Ascending aorta (tissue), 2 donors: ENCODE measurements at regions of chr3 and their contacts with region 1.

Region 1: DNA sequence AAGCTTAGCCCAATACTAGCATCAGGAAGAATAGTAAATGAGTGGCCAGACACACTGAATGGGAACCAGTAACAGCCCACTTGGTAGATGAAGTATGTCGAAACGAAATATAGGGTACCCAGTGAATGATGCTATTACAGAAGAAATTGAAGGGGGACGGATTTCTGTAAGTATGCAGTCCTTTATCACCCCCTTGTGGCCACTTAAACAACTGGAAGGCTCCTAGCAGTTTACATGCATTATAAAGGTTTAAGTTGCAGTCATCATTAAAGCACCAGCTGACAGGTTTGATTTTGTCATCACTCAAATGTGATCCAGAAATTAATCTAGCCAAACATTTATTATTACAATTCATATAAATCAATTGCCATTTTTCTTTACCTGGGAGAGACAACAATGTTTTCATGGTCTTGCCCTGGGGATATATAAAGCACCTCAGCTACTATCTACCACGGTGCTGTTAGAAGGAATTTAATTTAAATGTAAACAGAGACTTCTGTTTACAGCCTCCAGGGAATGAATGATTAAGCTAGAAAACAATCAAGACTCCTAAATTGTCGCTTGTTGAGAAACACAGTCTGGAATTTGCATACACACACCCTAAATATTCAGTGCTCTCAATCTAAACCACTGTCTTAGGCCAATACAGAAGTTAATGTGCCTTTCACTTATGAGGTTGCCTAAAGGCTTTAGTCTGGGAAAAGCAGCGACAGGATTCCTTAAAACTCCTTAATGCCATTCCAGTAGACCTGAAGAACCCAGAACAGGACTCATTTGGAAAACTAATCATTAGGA is 7.8 kb downstream of the EIF1B start:
- DNase-seq: no peak
- H3K4me3 ChIP-seq: no peak overlapping the region
- H3K27ac ChIP-seq: no peak overlapping the region
- H3K4me1 ChIP-seq: no peaks in the 10 kb centered on the region
- H3K27me3 ChIP-seq: no peaks in the 10 kb centered on the region
- CTCF ChIP-seq: peak; percentile 28 to 78 (median 64)

Region 2: GRCh38 chr3:40191850-40192448 is 125.3 kb before region 1 on chr3:
- intact Hi-C with region 1: loop called (anchors 1 kb)
- DNase-seq: peak in 1 of 2 donors; percentile 73
- H3K4me3 ChIP-seq: no peak overlapping the region
- H3K27ac ChIP-seq: no peak overlapping the region
- H3K4me1 ChIP-seq: no peaks in the 10 kb centered on the region
- H3K27me3 ChIP-seq: no peaks in the 10 kb centered on the region
- CTCF ChIP-seq: peak; percentile 56 to 88 (median 84)

Region 3: DNA sequence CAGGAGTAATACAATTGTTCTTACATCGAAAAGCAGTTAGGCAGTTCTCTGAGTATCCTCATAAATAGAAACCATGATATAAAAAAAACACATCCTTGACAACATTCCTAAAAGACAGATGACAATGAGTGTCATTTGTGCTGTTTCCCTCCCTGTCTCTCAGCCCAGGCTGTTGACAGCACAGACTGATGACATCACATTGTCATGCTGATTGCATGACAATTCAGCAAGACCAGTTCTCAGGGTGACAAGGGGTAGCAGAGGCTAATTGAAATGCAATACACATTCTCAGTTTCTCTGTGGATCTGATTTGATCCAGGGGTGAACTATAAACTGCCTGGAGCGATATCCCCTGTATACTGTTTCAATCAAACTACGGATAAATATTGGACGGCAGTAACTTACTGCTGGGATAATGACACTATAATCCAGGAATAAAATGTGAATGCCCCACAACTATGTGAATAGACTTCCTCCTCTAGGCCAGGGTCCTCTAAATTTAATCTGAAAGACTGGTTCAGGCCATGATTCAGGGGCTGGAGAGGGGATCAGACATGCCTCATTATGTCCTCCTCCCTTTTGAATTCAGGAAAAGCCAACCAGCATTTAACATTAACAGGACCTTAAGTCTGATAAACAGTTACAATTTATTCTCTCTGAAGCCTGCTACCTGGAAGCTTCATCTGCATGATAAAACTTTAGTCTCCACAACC is 24.5 kb before region 1 on chr3:
- intact Hi-C with region 1: no loop called
- DNase-seq: no peak
- H3K4me3 ChIP-seq: no peak overlapping the region
- H3K27ac ChIP-seq: no peak overlapping the region
- H3K4me1 ChIP-seq: no peaks in the 10 kb centered on the region
- H3K27me3 ChIP-seq: no peaks in the 10 kb centered on the region
- CTCF ChIP-seq: no peak

Region 4: DNA sequence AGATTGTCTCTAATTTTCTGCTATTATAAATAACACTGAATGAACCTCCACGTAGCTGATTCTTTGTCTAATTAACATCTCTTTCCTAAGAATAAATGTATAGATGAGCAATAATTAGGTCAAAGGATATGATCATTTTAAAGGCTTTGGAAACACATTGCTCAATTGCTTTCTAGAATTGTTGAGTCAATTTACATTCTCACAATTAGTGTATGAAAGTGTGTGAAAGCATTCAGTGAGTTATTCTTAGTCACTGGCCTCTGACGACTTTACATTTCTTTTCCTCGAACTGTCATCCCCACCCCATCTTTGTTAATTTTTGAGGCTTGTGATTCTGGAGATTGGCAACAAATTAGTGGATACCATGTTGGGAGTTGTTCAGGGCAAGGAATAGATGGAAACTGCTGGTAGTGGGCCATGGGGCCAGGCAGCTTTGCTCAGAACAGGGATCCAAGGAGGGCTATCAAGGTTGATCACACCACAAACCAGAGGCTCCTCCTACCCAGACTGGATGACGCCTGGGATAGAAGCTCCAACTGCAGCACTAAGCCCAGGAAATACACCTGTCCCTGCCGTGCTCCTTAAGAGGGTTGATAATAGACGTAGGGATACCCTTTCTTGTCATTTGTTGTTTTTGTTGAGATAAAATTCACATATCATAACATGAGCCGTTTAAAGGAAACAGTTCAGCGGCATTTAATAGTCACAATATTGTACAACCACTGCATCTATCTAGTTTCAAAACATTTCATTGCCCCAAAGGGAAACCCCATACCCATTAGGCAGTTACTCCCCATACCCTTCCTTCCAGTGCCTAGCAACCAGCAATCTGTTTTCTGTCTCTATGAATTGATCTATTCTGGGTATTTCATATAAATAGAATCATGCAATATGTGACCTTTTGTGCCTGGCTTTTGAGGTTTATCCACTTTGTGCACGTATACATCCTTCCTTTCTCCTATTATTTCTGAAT is 20.2 kb after region 1 on chr3:
- intact Hi-C with region 1: no loop called
- DNase-seq: no peak
- H3K4me3 ChIP-seq: no peak overlapping the region
- H3K27ac ChIP-seq: no peak overlapping the region
- H3K4me1 ChIP-seq: no peaks in the 10 kb centered on the region
- H3K27me3 ChIP-seq: no peaks in the 10 kb centered on the region
- CTCF ChIP-seq: no peak

Region 5: DNA sequence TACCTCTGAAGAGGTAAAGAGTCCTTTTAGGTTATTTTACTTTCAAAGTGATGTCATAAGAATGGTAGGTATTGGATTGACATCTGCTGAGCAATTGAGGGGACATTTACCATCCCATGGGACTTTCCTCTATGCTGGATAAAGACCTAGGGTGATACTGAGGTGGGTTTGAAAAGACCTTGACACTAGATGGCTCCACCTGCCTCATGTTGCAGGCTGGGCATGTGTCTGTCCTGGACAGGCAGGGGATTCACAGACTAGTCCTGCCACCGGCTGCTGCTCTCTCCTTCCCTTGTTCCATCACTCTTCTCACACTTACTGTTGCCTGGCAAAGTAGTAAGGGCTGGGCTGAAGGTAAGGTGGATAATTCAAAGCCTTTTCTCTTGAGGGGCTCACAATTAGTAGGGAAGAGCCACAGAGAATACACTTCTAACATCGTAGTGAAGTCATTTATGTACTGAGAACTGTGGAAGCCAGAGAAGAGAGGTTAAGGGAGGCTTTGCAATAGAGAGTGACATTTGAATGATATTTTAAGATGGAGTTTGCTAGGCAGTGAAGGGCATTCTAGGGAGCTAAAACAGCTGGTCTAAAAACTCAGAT is 1801.6 kb after region 1 on chr3:
- intact Hi-C with region 1: loop called (anchors 10 kb)
- DNase-seq: peak in 1 of 2 donors; percentile 63
- H3K4me3 ChIP-seq: no peak overlapping the region
- H3K27ac ChIP-seq: peak overlapping the region; percentile 30 to 39
- H3K4me1 ChIP-seq: peaks cover 0 to 26% of the 10 kb centered on the region in 2 donors
- H3K27me3 ChIP-seq: no peaks in the 10 kb centered on the region
- CTCF ChIP-seq: peak in 1 of 3 experiments; percentile 18